ENCODE measurements at regions of chr1 and their contacts with region 1.

Region 1: DNA sequence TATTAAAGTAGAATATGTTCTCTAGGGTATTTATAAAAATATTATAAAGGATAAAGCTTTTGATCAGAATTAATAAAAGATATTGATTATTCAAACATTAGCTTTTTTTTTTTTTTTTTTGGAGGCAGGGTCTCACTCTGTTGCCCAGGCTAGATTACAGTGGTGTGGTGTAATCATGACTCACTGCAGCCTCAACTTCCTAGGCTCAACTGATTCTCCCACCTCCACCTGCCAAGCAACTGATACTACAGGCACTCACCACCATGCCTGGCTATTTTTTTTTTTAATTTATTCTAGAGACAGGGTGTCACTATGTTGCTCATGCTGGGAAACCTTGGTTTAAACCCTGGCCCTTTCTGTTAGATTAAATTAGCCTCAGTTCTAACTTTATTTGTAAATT is 188.3 kb downstream of the CLEC20A start:
- DNase-seq: no peak
- ATAC-seq: no peak

Region 2: DNA sequence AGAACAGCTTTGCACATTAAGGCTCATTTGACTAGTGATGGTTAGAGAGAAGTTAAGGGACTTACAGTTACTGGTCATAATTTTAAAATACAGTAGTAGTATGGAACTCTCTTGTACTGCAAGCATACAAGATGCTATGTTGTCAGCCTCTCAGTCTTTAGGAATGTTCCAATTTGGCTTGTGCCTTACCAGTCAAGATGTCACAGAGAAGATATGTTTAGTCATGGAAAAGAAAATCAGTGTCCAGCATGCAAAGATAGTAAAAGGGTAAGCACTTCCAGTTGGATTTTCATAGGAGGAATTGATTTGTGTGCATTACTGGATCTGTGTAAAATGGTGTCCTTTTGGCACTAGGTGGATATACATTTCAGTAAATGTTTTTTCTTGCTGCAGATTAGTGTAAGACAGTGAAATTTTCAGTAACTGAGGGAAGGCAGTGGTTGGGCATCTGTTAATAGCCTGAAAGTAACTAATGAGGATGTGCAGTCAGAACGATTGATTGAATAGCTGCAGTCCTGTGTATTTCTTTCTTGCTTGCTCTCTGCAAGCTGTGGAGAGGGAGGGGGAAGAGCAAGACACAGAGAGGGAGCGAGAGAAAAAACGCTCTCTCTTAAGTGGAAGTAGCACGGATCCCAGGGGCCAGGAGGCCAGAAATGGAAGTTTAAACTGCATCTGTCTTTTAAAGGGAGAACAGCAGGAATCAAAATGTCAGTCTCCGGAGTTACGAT is 80.1 kb after region 1 on chr1:
- intact Hi-C with region 1: no loop called
- DNase-seq: no peak
- ATAC-seq: peak; percentile 62

Region 3: DNA sequence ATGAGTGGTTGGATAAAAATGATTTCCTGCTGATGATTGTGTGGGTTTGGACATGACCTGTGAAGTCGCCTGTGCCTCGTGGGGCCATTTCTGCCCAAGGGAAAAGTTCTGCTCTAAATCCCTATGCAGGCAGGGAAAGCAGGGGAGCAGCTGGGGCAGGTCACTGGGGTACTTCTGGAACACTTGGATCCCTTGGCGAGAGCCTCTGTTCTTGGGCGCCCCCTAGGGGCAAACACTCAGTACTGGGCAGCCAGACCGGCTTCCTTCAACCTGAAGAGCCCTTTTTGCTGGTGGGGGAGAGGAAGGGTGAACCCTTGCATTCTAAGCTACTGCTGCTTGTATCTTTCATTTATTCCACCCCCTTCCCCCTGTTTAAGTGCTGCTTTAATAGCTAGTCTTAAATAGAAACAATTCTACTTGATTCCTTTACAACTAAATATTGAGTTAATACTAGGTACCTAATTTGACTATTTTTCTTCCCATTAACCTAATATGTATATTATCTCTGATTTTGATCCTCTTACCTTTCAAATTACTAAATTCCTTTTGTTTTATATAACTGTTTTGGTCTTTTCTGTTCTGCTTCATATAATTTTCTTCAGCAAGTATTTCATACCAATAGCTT is 193.4 kb after region 1 on chr1:
- intact Hi-C with region 1: loop called (anchors 10 kb)
- DNase-seq: peak; percentile 82
- ATAC-seq: peak; percentile 82

Measured in left ventricle myocardium superior (tissue), 1 donor.